Natural killer cell (primary cell): ENCODE measurements at regions of chr16 and their contacts with region 1.

Region 1: DNA sequence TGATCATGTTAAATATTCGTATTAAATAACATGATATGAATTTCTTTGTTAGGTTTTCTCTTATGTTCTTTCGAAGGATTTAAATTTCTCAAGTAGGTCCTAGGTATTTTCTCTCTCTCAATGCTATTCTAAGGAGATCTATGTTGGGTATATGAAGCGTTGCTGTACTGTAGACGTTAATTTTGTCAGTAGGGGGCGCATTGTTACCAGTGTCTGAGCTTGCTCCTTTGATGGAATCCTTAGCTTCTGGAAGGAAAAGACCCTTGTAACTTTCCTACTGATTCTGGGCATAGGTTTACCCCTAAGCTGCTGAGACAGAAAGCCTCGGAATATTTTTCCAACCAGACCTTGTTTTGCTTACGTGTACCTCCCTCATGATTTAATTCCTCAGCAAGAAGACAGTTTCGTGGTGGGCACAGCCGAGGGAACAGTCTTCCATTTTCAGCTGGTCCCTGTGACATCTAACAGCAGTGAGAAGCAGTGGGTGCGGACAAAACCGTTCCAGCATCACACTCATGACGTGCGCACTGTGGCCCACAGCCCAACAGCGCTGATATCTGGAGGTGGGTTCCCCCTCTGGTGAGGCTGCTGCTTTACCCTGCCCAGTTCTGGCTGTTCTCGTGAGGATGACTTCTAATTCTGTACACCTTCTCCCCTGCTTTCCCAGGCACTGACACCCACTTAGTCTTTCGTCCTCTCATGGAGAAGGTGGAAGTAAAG is 17.9 kb downstream of the UTP4 start:
- DNase-seq: peak in 1 of 2 donors; percentile 85
- ATAC-seq: peak; percentile 79 to 88 (median 86)
- H3K4me3 ChIP-seq: no peak overlapping the region
- H3K4me3 Mint-ChIP-seq: no peak overlapping the region
- H3K27ac ChIP-seq: no peak overlapping the region
- H3K27ac Mint-ChIP-seq: no peak overlapping the region
- H3K4me1 ChIP-seq: no peaks in the 10 kb centered on the region
- H3K4me1 Mint-ChIP-seq: no peaks in the 10 kb centered on the region
- H3K27me3 ChIP-seq: no peaks in the 10 kb centered on the region
- H3K27me3 Mint-ChIP-seq: no peaks in the 10 kb centered on the region
- CTCF ChIP-seq: peak; percentile 91

Region 2: GRCh38 chr16:69286941-69287713 is 136.8 kb after region 1 on chr16:
- intact Hi-C with region 1: loop called (anchors 1 kb)
- DNase-seq: peak in 1 of 2 donors; percentile 83
- ATAC-seq: peak in 1 of 3 donors; percentile 51
- H3K4me3 ChIP-seq: no peak overlapping the region
- H3K4me3 Mint-ChIP-seq: no peak overlapping the region
- H3K27ac ChIP-seq: no peak overlapping the region
- H3K27ac Mint-ChIP-seq: no peak overlapping the region
- H3K4me1 ChIP-seq: no peaks in the 10 kb centered on the region
- H3K4me1 Mint-ChIP-seq: no peaks in the 10 kb centered on the region
- H3K27me3 ChIP-seq: no peaks in the 10 kb centered on the region
- H3K27me3 Mint-ChIP-seq: no peaks in the 10 kb centered on the region
- CTCF ChIP-seq: peak; percentile 79